Vagina (tissue), 2 donors: ENCODE measurements at regions of chrX and their contacts with region 1.

Region 1: DNA sequence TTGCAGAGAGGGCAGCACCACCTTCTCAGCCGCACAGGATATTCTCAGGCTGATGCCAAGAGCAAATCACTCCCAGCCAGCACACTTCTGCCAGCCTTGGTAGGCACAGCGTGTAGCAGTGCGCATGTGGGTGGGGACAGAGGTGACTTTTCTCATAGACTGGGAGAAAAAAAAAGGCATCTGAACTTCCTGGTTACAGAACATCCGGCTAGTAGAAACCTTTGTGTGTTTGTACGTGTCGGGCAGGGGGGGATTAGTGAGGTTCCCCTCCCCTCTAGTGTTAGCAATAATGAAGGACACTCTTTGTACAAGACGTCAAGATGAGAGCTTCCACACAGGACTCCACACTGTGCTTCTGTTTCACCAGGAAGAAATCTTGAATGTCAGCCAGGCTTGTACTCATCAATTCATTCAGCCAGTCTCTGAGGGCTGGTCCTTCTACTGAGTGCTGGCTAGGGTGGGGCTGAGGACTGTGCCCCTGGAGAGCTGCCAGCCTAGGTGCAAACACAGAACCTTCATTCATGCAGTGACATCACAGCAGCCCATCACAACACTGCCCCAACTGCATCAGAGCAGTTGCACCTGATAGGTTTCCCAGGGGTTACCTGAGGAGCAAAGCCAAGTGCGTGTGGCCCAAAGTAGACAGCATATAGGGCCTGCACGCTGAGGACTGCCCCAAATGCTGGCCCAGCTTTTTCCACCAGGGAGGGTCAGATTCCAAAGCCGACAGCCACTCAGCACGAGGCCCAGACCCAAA is 34.7 kb downstream of the SLC25A5 start:
- DNase-seq: no peak
- H3K4me3 ChIP-seq: no peak overlapping the region
- H3K27ac ChIP-seq: no peak overlapping the region
- H3K4me1 ChIP-seq: peaks cover 10% of the 10 kb centered on the region
- H3K27me3 ChIP-seq: no peaks in the 10 kb centered on the region
- CTCF ChIP-seq: no peak
- POLR2A ChIP-seq: no peak

Region 2: GRCh38 chrX:117522725-117523700 is 1979.9 kb before region 1 on chrX:
- intact Hi-C with region 1: loop called (anchors 5 kb)
- DNase-seq: no peak
- H3K4me3 ChIP-seq: no peak overlapping the region
- H3K27ac ChIP-seq: no peak overlapping the region
- H3K4me1 ChIP-seq: no peaks in the 10 kb centered on the region
- H3K27me3 ChIP-seq: no peaks in the 10 kb centered on the region
- CTCF ChIP-seq: no peak
- POLR2A ChIP-seq: no peak

Region 3: GRCh38 chrX:119343856-119344255 is 159.0 kb before region 1 on chrX:
- intact Hi-C with region 1: no loop called
- DNase-seq: no peak
- H3K4me3 ChIP-seq: no peak overlapping the region
- H3K27ac ChIP-seq: no peak overlapping the region
- H3K4me1 ChIP-seq: no peaks in the 10 kb centered on the region
- H3K27me3 ChIP-seq: no peaks in the 10 kb centered on the region
- CTCF ChIP-seq: no peak
- POLR2A ChIP-seq: no peak